Colonic mucosa (tissue), 4 donors: ENCODE measurements at regions of chr12 and their contacts with region 1.

Region 1: GRCh38 chr12:96985480-96986362 is 78.7 kb downstream of the NEDD1 start:
- DNase-seq: no peak
- H3K4me3 ChIP-seq: peak overlapping the region; percentile 30
- H3K27ac ChIP-seq: no peak overlapping the region
- H3K4me1 ChIP-seq: no peaks in the 10 kb centered on the region
- H3K27me3 ChIP-seq: peaks cover 7% of the 10 kb centered on the region
- CTCF ChIP-seq: peak; percentile 94

Region 2: DNA sequence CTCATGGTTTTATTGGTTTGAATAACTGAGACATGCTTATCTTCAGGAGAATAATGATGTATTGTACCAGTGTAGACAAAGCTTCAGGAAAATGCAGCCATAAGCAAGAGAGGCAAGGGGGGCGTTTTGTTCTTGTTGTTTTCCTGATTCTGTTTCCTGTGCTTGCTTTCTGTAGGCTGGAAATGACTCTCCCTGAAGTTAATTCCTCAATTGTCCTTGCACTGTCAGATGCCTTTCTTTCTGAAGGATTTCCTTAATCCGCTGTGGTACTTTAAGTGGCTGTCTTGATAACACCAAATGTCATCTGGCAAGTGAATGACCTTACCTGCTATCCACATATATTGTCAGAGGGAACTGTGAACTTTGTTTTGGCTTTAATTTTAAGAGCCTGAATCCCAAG is 141.3 kb after region 1 on chr12:
- intact Hi-C with region 1: no loop called
- DNase-seq: no peak
- H3K4me3 ChIP-seq: no peak overlapping the region
- H3K27ac ChIP-seq: no peak overlapping the region
- H3K4me1 ChIP-seq: no peaks in the 10 kb centered on the region
- H3K27me3 ChIP-seq: no peaks in the 10 kb centered on the region
- CTCF ChIP-seq: no peak

Region 3: GRCh38 chr12:97267594-97268202 is 282.0 kb after region 1 on chr12:
- intact Hi-C with region 1: no loop called
- DNase-seq: no peak
- H3K4me3 ChIP-seq: no peak overlapping the region
- H3K27ac ChIP-seq: no peak overlapping the region
- H3K4me1 ChIP-seq: no peaks in the 10 kb centered on the region
- H3K27me3 ChIP-seq: no peaks in the 10 kb centered on the region
- CTCF ChIP-seq: no peak

Region 4: GRCh38 chr12:97308576-97309198 is 323.0 kb after region 1 on chr12:
- intact Hi-C with region 1: loop called (anchors 10 kb)
- DNase-seq: no peak
- H3K4me3 ChIP-seq: no peak overlapping the region
- H3K27ac ChIP-seq: no peak overlapping the region
- H3K4me1 ChIP-seq: no peaks in the 10 kb centered on the region
- H3K27me3 ChIP-seq: no peaks in the 10 kb centered on the region
- CTCF ChIP-seq: peak; percentile 72